BJ (cell line): ENCODE measurements at regions of chr18 and their contacts with region 1.

Region 1: DNA sequence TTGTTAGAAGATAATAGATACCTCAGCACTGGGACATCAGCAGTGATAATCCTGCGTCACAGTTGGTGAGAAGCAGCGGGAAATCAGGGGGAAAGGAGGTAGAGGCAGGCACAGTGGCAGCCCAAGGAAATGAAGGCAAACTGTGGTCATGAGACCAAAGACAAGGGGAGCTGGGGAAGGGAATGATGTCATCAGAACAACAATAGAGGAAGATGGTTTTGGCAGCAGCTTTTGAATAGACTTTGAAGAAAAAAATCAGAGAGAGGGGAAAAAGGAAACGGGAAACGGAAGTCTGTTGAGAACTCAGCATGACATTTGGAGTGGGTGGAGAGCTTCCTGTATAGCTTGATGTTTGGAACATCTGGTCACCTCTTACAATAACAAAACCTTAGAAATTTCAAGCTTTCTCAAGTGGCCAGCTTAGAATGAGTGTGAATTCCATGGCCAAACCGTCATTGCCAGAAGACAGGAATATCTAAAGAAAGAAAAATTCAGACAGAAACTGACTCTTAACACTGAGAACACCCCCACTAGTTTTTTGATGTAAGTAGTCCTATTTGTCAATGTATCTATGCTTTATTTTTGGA is 18.4 kb upstream of the YES1 start:
- DNase-seq: no peak
- H3K4me3 ChIP-seq: no peak overlapping the region
- H3K27me3 ChIP-seq: no peaks in the 10 kb centered on the region
- CTCF ChIP-seq: no peak

Region 2: GRCh38 chr18:607930-608329 is 222.5 kb before region 1 on chr18:
- CTCF ChIA-PET with region 1: no interaction called
- POLR2A ChIA-PET with region 1: no interaction called
- DNase-seq: no peak
- H3K4me3 ChIP-seq: no peak overlapping the region
- H3K27me3 ChIP-seq: peaks cover 2% of the 10 kb centered on the region; the same call in 1 of the 2 replicates
- CTCF ChIP-seq: no peak

Region 3: DNA sequence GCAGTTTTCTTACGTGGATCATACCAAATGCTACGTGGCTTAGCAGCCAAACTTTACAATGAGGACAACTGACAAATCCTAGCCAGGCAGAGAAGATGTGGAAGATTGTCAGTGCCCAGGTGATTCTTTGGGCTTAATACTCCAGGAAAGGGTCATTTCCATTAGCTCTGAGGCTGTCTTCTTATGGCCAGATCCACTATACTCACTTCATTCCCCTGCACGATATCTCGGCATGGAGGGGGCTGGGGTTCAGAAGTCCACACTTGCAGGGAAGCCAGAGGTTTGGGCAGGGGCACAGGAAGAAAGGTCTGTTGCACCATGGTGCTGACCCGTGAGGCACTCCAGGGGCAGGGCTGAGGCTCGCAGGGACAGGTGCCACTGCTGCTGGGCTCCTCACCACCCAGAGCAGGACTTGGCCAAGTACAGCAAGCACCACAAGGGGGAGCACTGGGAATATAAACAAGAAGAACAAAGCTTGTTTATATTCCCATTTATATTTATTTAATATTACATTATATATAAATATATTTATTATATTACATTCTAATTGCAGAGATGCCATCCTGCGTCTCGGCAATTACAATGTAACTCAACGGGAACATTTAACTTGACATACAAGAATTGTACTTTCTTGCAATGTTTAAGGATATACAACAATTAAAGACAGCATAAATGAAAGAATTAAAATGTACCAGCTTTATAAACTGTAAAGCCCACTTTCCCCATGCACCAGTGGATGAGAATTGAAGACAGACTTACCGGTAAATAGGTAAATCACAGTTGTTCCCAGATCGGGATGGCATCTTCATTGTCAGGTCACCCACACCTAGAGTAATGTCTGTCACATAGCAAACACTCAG is 206.4 kb before region 1 on chr18:
- CTCF ChIA-PET with region 1: interaction called, 134 read pairs
- POLR2A ChIA-PET with region 1: no interaction called
- DNase-seq: no peak
- H3K4me3 ChIP-seq: no peak overlapping the region
- H3K27me3 ChIP-seq: no peaks in the 10 kb centered on the region; the same call in none of the 2 replicates
- CTCF ChIP-seq: peak; percentile 80

Region 4: DNA sequence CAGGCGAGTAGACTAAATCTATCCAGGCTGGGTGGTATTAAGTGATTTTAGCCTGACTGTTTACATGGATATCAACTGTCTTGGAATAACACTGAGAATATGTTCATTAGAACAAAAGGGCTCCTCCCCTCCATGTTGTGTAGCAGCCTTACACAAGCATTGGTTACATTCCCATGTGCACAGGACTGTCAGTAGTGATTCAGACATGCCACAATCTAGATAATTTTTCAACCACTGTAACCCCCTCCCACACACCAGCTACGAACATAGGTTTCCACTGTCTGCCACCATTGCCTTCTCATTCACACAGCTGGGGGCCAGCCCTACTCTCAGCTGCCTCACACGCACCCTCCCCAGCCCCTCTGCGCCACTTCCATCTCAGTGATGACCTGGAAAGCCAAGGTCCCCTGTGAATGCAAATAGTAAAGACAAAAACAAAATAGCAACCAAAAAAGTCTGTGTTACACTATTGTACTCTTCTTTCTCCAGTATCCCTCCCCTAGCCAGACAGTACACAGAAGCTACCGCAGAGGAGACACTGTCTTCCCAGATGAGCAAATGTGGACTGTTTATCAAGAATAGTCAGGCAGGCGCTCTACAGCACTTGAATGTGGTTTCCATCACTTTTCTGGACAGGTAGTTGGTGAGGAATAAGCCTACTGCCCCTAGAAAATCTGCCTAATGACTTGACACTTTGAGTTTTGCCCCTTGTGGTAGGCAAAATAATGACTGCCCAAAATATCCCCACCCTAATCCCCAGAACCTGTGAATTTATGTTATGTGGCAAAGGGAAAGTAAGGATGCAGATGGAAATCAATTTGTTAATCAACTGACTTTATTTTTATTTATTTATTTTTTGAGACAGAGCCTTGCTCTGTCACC is 200.9 kb before region 1 on chr18:
- CTCF ChIA-PET with region 1: interaction called, 134 read pairs
- POLR2A ChIA-PET with region 1: no interaction called
- DNase-seq: no peak
- H3K4me3 ChIP-seq: no peak overlapping the region
- H3K27me3 ChIP-seq: no peaks in the 10 kb centered on the region; the same call in none of the 2 replicates
- CTCF ChIP-seq: no peak

Region 5: DNA sequence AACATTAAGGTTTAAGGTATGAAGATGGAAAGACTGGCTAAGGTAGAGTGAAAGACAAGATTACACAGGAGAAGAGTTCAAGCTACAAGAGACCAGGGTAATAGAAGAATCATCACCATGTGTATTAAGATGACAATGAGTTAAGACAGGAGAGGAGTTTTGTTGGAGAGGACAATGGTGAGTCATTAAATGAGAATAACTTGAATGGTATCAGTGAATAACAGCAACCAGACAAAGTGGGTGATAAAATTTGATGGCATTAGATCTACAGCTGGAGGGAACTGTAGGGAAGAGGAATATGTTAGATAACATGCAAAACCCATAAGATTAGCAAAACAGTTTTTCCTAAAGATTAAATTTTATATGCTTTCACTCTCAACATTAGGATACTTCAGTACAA is 99.2 kb before region 1 on chr18:
- CTCF ChIA-PET with region 1: interaction called, 126 read pairs
- POLR2A ChIA-PET with region 1: no interaction called
- DNase-seq: no peak
- H3K4me3 ChIP-seq: no peak overlapping the region
- H3K27me3 ChIP-seq: no peaks in the 10 kb centered on the region
- CTCF ChIP-seq: no peak

Region 6: GRCh38 chr18:741931-742512 is 88.4 kb before region 1 on chr18:
- CTCF ChIA-PET with region 1: interaction called, 126 read pairs
- POLR2A ChIA-PET with region 1: no interaction called
- DNase-seq: peak; percentile 3
- H3K4me3 ChIP-seq: no peak overlapping the region
- H3K27me3 ChIP-seq: no peaks in the 10 kb centered on the region
- CTCF ChIP-seq: peak; percentile 63

Region 7: GRCh38 chr18:812376-813171 is 17.8 kb before region 1 on chr18:
- CTCF ChIA-PET with region 1: interaction called, 13 read pairs
- POLR2A ChIA-PET with region 1: no interaction called
- DNase-seq: peak; percentile 34
- H3K4me3 ChIP-seq: peak overlapping the region; percentile 84
- H3K27me3 ChIP-seq: no peaks in the 10 kb centered on the region
- CTCF ChIP-seq: no peak

Region 8: DNA sequence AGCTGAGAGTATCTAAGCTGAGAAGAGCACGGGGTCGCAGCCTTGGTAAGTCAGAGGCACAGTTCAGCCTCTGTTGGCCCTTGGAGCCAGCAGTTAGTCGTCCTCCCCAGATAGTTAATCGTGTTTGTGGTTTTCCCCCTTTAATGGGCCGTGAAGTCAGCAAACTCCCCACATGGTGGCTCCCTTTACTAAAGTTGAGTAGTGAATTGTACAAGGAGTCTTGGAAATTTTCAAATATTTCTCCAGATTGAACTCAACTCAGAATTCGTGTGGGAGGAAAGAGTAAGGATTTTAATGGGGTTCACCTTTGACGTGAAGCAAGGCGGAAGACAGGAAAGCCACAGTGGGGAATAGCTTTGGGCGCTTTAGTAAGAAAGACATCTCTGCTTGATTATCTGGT is 71.8 kb after region 1 on chr18:
- CTCF ChIA-PET with region 1: no interaction called
- POLR2A ChIA-PET with region 1: no interaction called
- DNase-seq: no peak
- H3K4me3 ChIP-seq: no peak overlapping the region
- H3K27me3 ChIP-seq: peaks cover 31% of the 10 kb centered on the region
- CTCF ChIP-seq: no peak